Common myeloid progenitor, CD34-positive (primary cell): ENCODE measurements at regions of chr12 and their contacts with region 1.

Region 1: GRCh38 chr12:113221181-113221997 is at the start of gene TPCN1:
- DNase-seq: peak; percentile 100
- H3K4me3 ChIP-seq: peak within 1 kb of the TSS; percentile 57 to 95 (median 74)
- H3K27ac ChIP-seq: peak within 1 kb of the TSS in 1 of 2 experiments; percentile 75
- H3K4me1 ChIP-seq: peaks cover 4 to 29% (median 27%) of the 10 kb centered on the region in 4 experiments
- H3K27me3 ChIP-seq: no peaks in the 10 kb centered on the region

Region 2: DNA sequence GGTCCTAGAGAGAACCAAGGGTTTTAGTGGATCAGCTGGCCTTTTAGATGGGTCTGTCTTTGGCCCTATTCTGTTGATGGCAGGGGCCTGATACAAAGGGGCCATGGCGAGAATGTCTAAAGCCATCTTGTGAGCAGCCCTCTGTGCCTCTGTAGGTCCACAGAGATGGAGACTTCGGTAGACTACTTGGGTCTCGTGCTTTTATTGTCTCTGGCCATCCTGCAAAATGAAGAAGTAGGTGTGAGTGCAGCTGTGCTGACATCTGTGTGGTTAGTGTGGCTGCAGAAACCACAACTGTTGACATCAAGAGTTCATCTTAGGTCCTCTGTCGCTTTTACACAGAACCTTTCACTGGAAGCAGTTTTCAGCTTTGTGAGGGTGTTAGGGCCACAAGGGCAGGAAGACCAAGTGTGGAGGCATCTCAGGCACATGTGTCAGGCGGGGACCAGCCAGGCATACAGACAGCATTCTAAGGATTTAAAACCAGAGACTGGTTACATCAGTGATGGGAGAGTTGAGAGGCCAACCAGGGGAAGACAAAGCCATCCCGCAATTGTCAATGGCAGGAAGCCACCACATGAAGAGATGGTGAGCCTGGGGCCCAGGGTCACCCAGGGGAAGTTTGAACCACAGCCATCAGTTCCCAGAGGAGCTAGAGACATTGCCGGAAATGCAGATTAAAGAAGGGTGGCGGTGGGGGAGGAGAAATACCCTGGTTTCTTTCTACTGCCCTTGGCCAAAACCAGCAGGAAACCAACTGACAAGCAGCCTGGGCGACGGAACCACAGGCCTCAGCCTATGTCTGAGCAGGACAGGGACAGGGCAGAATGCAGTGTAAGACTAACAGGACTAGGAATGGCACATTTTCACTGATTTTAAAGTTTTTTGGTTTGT is 13.1 kb before region 1 on chr12:
- CTCF ChIA-PET with region 1: interaction called, 19 read pairs
- POLR2A ChIA-PET with region 1: interaction called, 11 read pairs
- DNase-seq: peak; percentile 90 to 98 (median 98)
- H3K4me3 ChIP-seq: peak overlapping the region in 2 of 7 experiments; percentile 17 to 26
- H3K27ac ChIP-seq: peak overlapping the region; percentile 62 to 84
- H3K4me1 ChIP-seq: peaks cover 16 to 64% (median 46%) of the 10 kb centered on the region in 4 experiments
- H3K27me3 ChIP-seq: no peaks in the 10 kb centered on the region

Region 3: DNA sequence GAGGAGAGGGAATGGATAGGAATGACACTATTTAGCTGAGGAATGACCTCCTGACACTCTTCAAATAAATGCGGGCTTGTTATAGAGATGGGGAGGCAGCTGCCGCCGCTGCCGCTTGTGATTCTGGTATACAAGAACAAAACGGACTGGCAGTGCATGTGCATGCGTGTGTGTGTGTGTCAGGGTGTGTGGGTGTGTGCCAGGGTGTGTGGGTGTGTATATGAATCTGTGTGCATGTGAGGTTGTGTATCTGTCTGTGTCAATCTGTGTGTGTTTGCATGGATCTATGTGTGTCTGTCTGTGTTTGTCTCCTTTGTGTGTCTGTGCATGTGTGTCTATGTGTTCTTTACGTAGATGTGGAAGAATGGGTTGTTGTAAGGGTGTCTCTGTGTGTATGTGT is 276.3 kb after region 1 on chr12:
- CTCF ChIA-PET with region 1: no interaction called
- POLR2A ChIA-PET with region 1: no interaction called
- DNase-seq: no peak
- H3K4me3 ChIP-seq: no peak overlapping the region
- H3K27ac ChIP-seq: no peak overlapping the region
- H3K4me1 ChIP-seq: no peaks in the 10 kb centered on the region
- H3K27me3 ChIP-seq: peaks cover 3 to 68% (median 13%) of the 10 kb centered on the region in 5 experiments